ENCODE measurements at regions of chr11 and their contacts with region 1.

Region 1: DNA sequence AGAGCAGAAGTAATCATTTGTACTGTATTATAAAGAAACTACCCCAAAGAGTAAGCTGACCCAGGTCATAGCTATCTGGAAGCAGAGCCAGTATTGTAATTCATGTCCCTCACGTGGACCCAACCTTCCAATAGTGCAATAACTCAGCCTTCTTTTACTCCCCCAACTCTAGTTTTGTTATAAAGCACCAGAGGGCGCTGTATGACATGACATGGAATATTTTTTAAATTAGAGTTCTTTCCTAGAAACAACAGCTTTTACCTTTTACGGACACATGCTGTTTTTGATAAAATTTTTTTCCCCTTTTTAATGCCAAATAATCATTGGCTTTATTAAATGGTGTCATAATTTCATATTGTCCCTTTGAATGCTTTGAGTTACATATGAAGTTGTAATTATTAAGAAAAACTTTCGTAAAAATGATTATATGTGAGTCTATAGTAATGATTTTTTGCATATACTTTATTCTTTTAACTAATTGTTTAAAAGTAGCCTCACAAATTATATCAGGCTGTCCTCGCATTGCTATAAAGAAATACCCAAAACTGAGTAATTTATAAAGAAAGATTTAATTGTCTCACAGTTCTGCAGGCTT is 76.9 kb downstream of the DKK3 start:
- DNase-seq: no peak
- H3K4me3 ChIP-seq: no peak overlapping the region
- CTCF ChIP-seq: peak; percentile 40

Region 2: GRCh38 chr11:11916981-11917399 is 14.6 kb before region 1 on chr11:
- CTCF ChIA-PET with region 1: interaction called, 17 read pairs
- POLR2A ChIA-PET with region 1: no interaction called
- DNase-seq: peak; percentile 68
- H3K4me3 ChIP-seq: no peak overlapping the region
- CTCF ChIP-seq: no peak

Measured in AG04449 (cell line).